Heart left ventricle (tissue), 16 donors: ENCODE measurements at regions of chr21 and their contacts with region 1.

Region 1: DNA sequence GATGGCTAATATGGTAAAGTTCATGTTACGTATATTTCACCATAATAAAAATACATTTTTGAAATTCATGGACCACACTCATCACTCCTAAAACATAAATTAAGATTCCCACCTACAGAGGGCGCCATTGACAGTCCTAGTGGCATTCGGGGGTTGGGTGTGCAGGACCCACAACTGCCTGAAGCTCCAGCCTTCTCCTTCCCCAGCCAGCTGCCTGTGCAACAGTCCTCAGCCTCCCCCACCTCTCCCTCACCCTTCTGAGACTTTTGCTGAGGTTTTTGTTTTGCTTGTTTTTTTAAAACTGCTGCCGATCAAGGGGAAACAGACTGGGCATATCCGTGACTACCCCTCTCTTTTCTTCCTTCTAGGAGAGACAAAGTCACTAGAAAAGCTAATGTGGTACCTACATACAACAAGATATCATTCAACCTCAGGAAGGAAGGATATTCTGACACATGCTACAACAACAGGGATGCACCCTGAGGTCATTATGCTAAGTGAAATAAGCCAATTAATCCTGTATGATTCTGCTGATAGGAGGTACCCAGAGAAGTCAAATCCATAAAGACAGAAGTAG is 9.2 kb upstream of the EVA1C start:
- DNase-seq: peak in 4 of 5 donors; percentile 60 to 74 (median 68)
- ATAC-seq: peak; percentile 83 to 87 (median 84)
- H3K4me3 ChIP-seq: no peak overlapping the region
- H3K27ac ChIP-seq: no peak overlapping the region
- H3K4me1 ChIP-seq: peaks cover 0 to 27% (median 8%) of the 10 kb centered on the region in 12 donors
- H3K27me3 ChIP-seq: peaks cover 0 to 8% (median 0%) of the 10 kb centered on the region in 9 donors
- CTCF ChIP-seq: peak; percentile 53 to 88 (median 76)
- POLR2A ChIP-seq: no peak

Region 2: GRCh38 chr21:31964692-31965091 is 438.6 kb before region 1 on chr21:
- intact Hi-C with region 1: no loop called
- DNase-seq: no peak
- ATAC-seq: no peak
- H3K4me3 ChIP-seq: no peak overlapping the region
- H3K27ac ChIP-seq: no peak overlapping the region
- H3K4me1 ChIP-seq: no peaks in the 10 kb centered on the region
- H3K27me3 ChIP-seq: no peaks in the 10 kb centered on the region
- CTCF ChIP-seq: no peak
- POLR2A ChIP-seq: no peak

Region 3: DNA sequence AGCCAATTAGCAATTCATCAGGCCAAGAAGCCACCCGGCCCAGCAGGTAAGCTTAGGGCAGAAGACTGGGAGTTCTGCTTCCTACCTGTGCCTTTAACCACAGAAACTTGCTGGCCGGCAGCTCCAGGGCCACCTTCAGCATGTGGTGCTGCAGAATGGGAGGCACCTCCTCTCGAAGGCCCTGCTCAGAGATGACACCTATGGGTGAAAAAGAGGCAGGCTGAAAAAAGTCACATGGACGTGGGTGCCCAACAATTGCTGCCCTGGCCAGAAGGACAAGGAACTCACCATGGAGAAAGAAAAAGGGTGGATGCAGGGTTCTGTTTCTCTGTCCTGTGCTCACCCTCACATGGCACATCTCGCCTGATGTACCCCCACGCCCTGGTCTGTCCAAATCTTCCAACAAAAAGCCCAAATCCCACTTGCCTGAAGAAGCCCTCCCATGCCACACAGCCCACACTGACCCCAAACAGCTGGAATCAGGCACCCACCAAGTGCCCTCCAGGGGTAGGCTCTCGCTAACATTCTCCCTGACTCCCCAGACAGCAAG is 43.5 kb before region 1 on chr21:
- intact Hi-C with region 1: no loop called
- DNase-seq: no peak
- ATAC-seq: peak in 3 of 4 donors; percentile 19 to 25 (median 23)
- H3K4me3 ChIP-seq: no peak overlapping the region
- H3K27ac ChIP-seq: peak overlapping the region in 1 of 12 donors; percentile 2
- H3K4me1 ChIP-seq: peaks cover 0 to 28% (median 9%) of the 10 kb centered on the region in 12 donors
- H3K27me3 ChIP-seq: no peaks in the 10 kb centered on the region
- CTCF ChIP-seq: peak in 6 of 12 donors; percentile 11 to 37 (median 14)
- POLR2A ChIP-seq: no peak

Region 4: DNA sequence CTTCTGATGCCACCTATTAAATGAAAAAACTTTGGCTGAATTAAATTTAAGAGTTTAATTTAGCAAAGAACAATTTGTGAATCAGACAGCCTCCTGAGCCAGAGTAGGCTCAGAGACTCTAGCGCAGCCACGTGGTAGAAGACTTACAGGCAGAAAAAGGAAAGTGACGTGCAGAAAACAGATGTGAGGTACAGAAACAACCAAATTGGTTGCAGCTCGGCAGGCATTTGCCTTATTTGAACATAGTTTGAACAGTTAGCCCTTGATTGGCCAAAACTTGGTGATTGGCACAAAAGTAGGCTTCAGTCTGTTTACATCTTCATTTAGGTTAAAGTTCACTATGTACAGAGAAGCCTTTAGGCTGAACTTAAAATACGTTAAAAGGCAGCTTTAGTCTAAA is 159.1 kb after region 1 on chr21:
- intact Hi-C with region 1: loop called in 3 of 10 experiments (anchors 1 to 5 kb)
- DNase-seq: peak in 4 of 5 donors; percentile 58 to 62 (median 60)
- ATAC-seq: peak; percentile 55 to 84 (median 66)
- H3K4me3 ChIP-seq: no peak overlapping the region
- H3K27ac ChIP-seq: peak overlapping the region in 9 of 12 donors; percentile 5 to 70 (median 56)
- H3K4me1 ChIP-seq: peaks cover 0 to 11% (median 1%) of the 10 kb centered on the region in 12 donors
- H3K27me3 ChIP-seq: no peaks in the 10 kb centered on the region
- CTCF ChIP-seq: peak; percentile 37 to 81 (median 58)
- POLR2A ChIP-seq: no peak

Region 5: GRCh38 chr21:32569261-32570230 is 166.3 kb after region 1 on chr21:
- intact Hi-C with region 1: loop called in 9 of 10 experiments (anchors 2 to 5 kb)
- DNase-seq: peak; percentile 72 to 85 (median 75)
- ATAC-seq: peak; percentile 84 to 94 (median 94)
- H3K4me3 ChIP-seq: peak overlapping the region; percentile 28 to 73 (median 60)
- H3K27ac ChIP-seq: peak overlapping the region; percentile 37 to 88 (median 81)
- H3K4me1 ChIP-seq: peaks cover 0 to 19% (median 4%) of the 10 kb centered on the region in 12 donors
- H3K27me3 ChIP-seq: no peaks in the 10 kb centered on the region
- CTCF ChIP-seq: peak; percentile 64 to 90 (median 83)
- POLR2A ChIP-seq: peak in 1 of 2 donors; percentile 32

Region 6: DNA sequence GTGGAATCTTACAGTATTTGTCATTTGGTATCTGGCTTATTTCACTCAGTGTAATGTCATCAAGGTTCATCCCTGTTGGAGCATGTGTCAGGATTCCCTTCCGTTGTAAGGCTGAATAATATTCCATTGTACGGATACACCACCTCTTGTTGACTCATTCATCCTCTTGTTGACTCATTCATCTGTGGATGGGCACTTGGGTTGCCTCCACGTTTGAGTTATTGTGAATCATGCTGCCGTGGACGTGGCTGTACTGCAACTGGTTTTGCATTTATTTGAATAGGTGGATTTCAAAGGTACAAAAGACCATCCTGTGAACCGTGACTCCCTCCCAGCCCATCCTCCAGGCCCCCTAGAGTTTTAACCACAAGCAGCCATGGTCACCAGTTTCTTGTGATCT is 193.9 kb after region 1 on chr21:
- intact Hi-C with region 1: loop called (anchors 1 to 5 kb)
- DNase-seq: no peak
- ATAC-seq: no peak
- H3K4me3 ChIP-seq: no peak overlapping the region
- H3K27ac ChIP-seq: no peak overlapping the region
- H3K4me1 ChIP-seq: no peaks in the 10 kb centered on the region
- H3K27me3 ChIP-seq: no peaks in the 10 kb centered on the region
- CTCF ChIP-seq: no peak
- POLR2A ChIP-seq: no peak

Region 7: GRCh38 chr21:32604464-32604863 is 201.2 kb after region 1 on chr21:
- intact Hi-C with region 1: loop called (anchors 1 to 5 kb)
- DNase-seq: no peak
- ATAC-seq: no peak
- H3K4me3 ChIP-seq: no peak overlapping the region
- H3K27ac ChIP-seq: no peak overlapping the region
- H3K4me1 ChIP-seq: no peaks in the 10 kb centered on the region
- H3K27me3 ChIP-seq: no peaks in the 10 kb centered on the region
- CTCF ChIP-seq: no peak
- POLR2A ChIP-seq: no peak